Gastrocnemius medialis (tissue), 4 donors: ENCODE measurements at regions of chr13 and their contacts with region 1.

Region 1: GRCh38 chr13:73708393-73708985 is 425.7 kb downstream of the KLF12 start:
- DNase-seq: peak in 1 of 2 donors; percentile 27
- ATAC-seq: peak; percentile 47 to 97
- H3K4me3 ChIP-seq: no peak overlapping the region
- H3K27ac ChIP-seq: no peak overlapping the region
- H3K4me1 ChIP-seq: peaks cover 0 to 7% of the 10 kb centered on the region in 2 donors
- H3K27me3 ChIP-seq: no peaks in the 10 kb centered on the region
- CTCF ChIP-seq: peak; percentile 46 to 88 (median 74)
- POLR2A ChIP-seq: no peak

Region 2: GRCh38 chr13:72808917-72809500 is 899.5 kb before region 1 on chr13:
- in situ Hi-C with region 1: loop called (anchors 25 kb)
- intact Hi-C with region 1: loop called (anchors 2 kb)
- DNase-seq: no peak
- ATAC-seq: no peak
- H3K4me3 ChIP-seq: no peak overlapping the region
- H3K27ac ChIP-seq: no peak overlapping the region
- H3K4me1 ChIP-seq: no peaks in the 10 kb centered on the region
- H3K27me3 ChIP-seq: no peaks in the 10 kb centered on the region
- CTCF ChIP-seq: peak in 3 of 5 experiments; percentile 34 to 69 (median 46)
- POLR2A ChIP-seq: no peak

Region 3: GRCh38 chr13:72839831-72840426 is 868.6 kb before region 1 on chr13:
- in situ Hi-C with region 1: no loop called
- intact Hi-C with region 1: loop called (anchors 2 kb)
- DNase-seq: no peak
- ATAC-seq: peak in 1 of 2 donors; percentile 78
- H3K4me3 ChIP-seq: no peak overlapping the region
- H3K27ac ChIP-seq: no peak overlapping the region
- H3K4me1 ChIP-seq: no peaks in the 10 kb centered on the region
- H3K27me3 ChIP-seq: no peaks in the 10 kb centered on the region
- CTCF ChIP-seq: peak in 4 of 5 experiments; percentile 17 to 56 (median 44)
- POLR2A ChIP-seq: no peak